HEK293 (cell line): ENCODE measurements at regions of chr14 and their contacts with region 1.

Region 1: DNA sequence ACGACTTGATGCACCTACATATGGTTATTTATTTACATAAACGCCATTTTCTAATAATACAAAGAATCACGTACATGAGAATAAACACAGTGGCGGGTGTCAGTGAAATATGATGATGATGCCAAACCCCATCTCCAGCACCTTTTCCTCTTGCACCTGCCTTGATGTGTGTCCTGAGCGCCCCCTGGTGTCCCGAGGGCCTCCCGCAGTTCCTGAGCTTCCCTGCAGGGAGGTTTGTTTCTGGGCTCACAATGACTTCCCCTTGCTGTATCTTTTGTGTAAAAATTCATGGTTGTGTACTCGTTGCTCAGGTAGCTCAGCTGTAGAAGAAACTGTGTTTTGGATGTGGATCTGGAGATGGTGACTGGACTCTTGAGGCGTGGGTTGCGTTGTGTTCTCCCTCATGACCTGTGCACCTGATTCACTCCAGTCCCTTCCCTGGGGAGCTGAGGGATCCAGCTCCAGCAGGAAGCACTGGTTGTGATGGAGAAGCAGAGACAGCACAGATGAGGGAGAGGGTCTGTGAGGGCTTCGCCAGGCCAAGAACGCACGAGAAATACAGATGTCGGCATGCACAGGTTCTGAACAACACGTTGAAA is 1037.8 kb downstream of the TMEM121 start:
- H3K4me3 ChIP-seq: no peak overlapping the region
- H3K27ac ChIP-seq: no peak overlapping the region
- H3K4me1 ChIP-seq: no peaks in the 10 kb centered on the region
- CTCF ChIP-seq: 0 out of 2 replicates have a peak, but pooled peaks have one; percentile 29

Region 2: GRCh38 chr14:106530423-106531107 is 33.6 kb before region 1 on chr14:
- CTCF ChIA-PET with region 1: interaction called, 12 read pairs
- POLR2A ChIA-PET with region 1: no interaction called
- H3K4me3 ChIP-seq: no peak overlapping the region
- H3K27ac ChIP-seq: no peak overlapping the region
- H3K4me1 ChIP-seq: no peaks in the 10 kb centered on the region
- CTCF ChIP-seq: no peak

Region 3: GRCh38 chr14:106538201-106538600 is 26.0 kb before region 1 on chr14:
- CTCF ChIA-PET with region 1: interaction called, 21 read pairs
- POLR2A ChIA-PET with region 1: no interaction called
- H3K4me3 ChIP-seq: no peak overlapping the region
- H3K27ac ChIP-seq: no peak overlapping the region
- H3K4me1 ChIP-seq: no peaks in the 10 kb centered on the region
- CTCF ChIP-seq: no peak

Region 4: GRCh38 chr14:106578481-106578880 is 14.3 kb after region 1 on chr14:
- CTCF ChIA-PET with region 1: interaction called, 10 read pairs
- POLR2A ChIA-PET with region 1: no interaction called
- H3K4me3 ChIP-seq: no peak overlapping the region
- H3K27ac ChIP-seq: no peak overlapping the region
- H3K4me1 ChIP-seq: no peaks in the 10 kb centered on the region
- CTCF ChIP-seq: no peak

Region 5: GRCh38 chr14:106586098-106586704 is 22.0 kb after region 1 on chr14:
- CTCF ChIA-PET with region 1: interaction called, 10 read pairs
- POLR2A ChIA-PET with region 1: no interaction called
- H3K4me3 ChIP-seq: no peak overlapping the region
- H3K27ac ChIP-seq: no peak overlapping the region
- H3K4me1 ChIP-seq: no peaks in the 10 kb centered on the region
- CTCF ChIP-seq: peak; percentile 30; the same call in 1 of the 2 replicates